IMR-90 (cell line): ENCODE measurements at regions of chr6 and their contacts with region 1.

Region 1: DNA sequence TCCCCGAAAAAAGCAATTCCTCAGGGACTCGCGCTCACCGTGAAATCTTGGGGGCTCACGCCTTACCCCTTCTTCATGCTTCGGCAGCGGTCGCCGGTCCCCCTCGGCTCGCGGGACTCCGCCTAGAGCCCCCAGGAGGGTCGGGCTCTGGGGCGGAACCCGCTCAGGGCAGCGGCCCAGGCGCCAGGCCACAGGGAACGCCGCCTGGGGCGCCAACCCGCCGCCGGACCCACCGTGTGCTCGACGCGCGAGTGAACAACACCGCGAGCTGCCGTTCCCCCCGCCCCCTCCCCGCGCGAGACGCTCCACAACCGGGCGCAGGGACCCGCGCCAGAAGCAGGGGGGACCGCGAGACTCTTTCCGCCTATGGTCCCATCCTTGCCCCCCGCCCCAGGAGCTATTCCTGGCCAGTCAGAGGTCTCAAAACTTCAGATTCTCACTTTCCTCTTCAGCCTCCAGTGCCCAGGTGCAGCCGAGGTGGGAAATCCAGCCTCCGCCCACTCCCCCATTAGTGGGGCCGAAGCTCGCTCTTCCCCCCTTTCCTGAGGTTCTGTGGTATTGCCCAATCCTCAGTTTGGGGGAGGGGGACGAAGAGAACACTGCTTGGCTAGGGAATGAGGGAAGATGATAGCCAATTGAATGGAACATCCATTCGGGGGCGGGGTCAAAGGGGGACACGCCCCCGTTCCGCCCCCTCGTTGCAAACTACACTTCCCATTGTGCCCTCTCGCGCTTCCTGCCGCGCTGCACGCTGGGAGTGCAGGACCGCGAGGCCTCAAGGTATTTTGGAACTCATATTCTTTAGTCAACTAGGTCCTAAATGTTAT is at the start of gene WASF1:
- DNase-seq: peak; percentile 98
- ATAC-seq: peak; percentile 95
- H3K4me3 ChIP-seq: peak within 1 kb of the TSS; percentile 81
- H3K27ac ChIP-seq: peak within 1 kb of the TSS; percentile 98
- H3K4me1 ChIP-seq: 0 out of 2 replicates have a peak, but pooled peaks cover 5% of the 10 kb centered on the region
- H3K27me3 ChIP-seq: no peaks in the 10 kb centered on the region
- CTCF ChIP-seq: no peak
- POLR2A ChIP-seq: no peak; the same call in 1 of the 2 replicates
- RAD21 ChIP-seq: no peak
- total RNA-seq, gene WASF1: 3.0 and 4.4 TPM in 2 replicates

Region 2: GRCh38 chr6:109760208-109760607 is 419.4 kb before region 1 on chr6:
- CTCF ChIA-PET with region 1: no interaction called
- POLR2A ChIA-PET with region 1: no interaction called
- dilution Hi-C with region 1: no loop called
- in situ Hi-C with region 1: no loop called
- intact Hi-C with region 1: no loop called
- DNase-seq: peak; percentile 33
- ATAC-seq: no peak
- H3K4me3 ChIP-seq: no peak overlapping the region
- H3K27ac ChIP-seq: no peak overlapping the region
- H3K4me1 ChIP-seq: peaks cover 2% of the 10 kb centered on the region
- H3K27me3 ChIP-seq: no peaks in the 10 kb centered on the region
- CTCF ChIP-seq: no peak
- POLR2A ChIP-seq: no peak
- RAD21 ChIP-seq: no peak

Region 3: DNA sequence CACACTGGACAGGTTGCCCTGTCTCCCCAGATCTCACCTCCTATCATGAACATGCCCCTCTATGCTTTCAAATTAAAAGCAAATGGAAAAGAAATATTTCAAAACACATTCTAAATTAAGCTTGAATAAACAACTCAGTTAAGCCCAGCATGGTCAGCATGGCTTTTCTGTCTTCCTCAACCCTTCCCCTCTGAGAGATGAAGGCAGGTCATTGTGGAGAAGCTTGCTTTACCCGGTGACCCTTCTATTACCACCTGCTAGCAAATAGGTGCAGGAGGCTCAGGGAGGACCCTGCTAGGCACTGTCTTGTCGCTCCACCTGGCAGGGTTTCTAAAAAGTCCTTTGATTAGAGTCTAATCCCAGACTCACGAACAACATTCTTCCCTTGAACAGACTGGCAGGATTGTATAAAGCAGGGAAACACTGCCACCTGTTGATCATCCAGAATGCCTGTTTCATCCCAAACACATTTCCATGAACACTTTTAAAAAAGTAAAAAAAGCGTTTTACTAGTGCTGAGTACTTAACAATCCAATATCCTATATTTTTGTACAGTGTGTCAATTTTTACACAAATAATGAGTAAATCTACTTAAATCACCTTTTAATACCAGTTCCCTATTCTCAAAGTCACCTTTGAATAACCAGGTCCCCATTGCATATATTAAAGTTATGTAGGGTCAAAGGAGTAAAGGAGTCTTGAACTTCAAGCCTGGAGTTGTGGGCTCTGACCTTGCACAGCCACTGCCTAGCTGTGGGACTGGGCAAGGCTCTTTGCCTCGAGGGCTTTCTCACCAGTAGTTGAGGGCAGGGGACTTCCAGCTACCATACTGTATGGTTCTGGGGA is 126.0 kb before region 1 on chr6:
- CTCF ChIA-PET with region 1: no interaction called
- POLR2A ChIA-PET with region 1: no interaction called
- dilution Hi-C with region 1: no loop called
- in situ Hi-C with region 1: no loop called
- intact Hi-C with region 1: loop called (anchors 5 kb)
- DNase-seq: peak; percentile 68
- ATAC-seq: peak; percentile 79
- H3K4me3 ChIP-seq: no peak overlapping the region
- H3K27ac ChIP-seq: no peak overlapping the region
- H3K4me1 ChIP-seq: no peaks in the 10 kb centered on the region
- H3K27me3 ChIP-seq: peaks cover 29% of the 10 kb centered on the region
- CTCF ChIP-seq: peak; percentile 91
- POLR2A ChIP-seq: no peak
- RAD21 ChIP-seq: peak; percentile 80

Region 4: DNA sequence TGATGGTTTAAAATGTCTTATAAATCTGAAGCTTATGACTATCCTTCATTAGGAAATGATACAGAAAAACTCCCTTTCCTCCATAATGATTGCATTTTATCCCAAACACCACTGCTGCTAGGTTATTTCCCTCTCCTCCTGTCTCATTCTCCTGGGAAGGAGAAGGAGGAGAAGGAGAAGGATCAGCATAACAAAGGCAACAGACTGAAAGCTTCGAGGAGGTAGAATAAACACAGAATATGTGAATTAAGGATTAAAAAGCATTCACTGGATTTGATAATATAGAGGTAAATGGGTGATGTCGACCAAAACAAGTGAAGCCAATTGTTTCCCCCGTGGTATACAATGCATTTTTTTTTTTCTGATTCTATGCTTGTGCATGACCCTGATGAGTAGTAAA is 82.2 kb before region 1 on chr6:
- CTCF ChIA-PET with region 1: no interaction called
- POLR2A ChIA-PET with region 1: no interaction called
- dilution Hi-C with region 1: no loop called
- in situ Hi-C with region 1: no loop called
- intact Hi-C with region 1: loop called (anchors 2 kb)
- DNase-seq: no peak
- ATAC-seq: peak; percentile 28
- H3K4me3 ChIP-seq: no peak overlapping the region
- H3K27ac ChIP-seq: peak overlapping the region; percentile 12; the same call in 1 of the 2 replicates
- H3K4me1 ChIP-seq: 0 out of 2 replicates have a peak, but pooled peaks cover 2% of the 10 kb centered on the region
- H3K27me3 ChIP-seq: no peaks in the 10 kb centered on the region
- CTCF ChIP-seq: no peak
- POLR2A ChIP-seq: no peak
- RAD21 ChIP-seq: no peak

Region 5: GRCh38 chr6:110325197-110325596 is 145.6 kb after region 1 on chr6:
- CTCF ChIA-PET with region 1: no interaction called
- POLR2A ChIA-PET with region 1: no interaction called
- dilution Hi-C with region 1: no loop called
- in situ Hi-C with region 1: no loop called
- intact Hi-C with region 1: loop called (anchors 2 kb)
- DNase-seq: peak; percentile 85
- ATAC-seq: peak; percentile 78
- H3K4me3 ChIP-seq: no peak overlapping the region
- H3K27ac ChIP-seq: peak overlapping the region; percentile 83; the same call in 1 of the 2 replicates
- H3K4me1 ChIP-seq: peaks cover 34% of the 10 kb centered on the region
- H3K27me3 ChIP-seq: no peaks in the 10 kb centered on the region
- CTCF ChIP-seq: no peak
- POLR2A ChIP-seq: no peak
- RAD21 ChIP-seq: no peak

Region 6: DNA sequence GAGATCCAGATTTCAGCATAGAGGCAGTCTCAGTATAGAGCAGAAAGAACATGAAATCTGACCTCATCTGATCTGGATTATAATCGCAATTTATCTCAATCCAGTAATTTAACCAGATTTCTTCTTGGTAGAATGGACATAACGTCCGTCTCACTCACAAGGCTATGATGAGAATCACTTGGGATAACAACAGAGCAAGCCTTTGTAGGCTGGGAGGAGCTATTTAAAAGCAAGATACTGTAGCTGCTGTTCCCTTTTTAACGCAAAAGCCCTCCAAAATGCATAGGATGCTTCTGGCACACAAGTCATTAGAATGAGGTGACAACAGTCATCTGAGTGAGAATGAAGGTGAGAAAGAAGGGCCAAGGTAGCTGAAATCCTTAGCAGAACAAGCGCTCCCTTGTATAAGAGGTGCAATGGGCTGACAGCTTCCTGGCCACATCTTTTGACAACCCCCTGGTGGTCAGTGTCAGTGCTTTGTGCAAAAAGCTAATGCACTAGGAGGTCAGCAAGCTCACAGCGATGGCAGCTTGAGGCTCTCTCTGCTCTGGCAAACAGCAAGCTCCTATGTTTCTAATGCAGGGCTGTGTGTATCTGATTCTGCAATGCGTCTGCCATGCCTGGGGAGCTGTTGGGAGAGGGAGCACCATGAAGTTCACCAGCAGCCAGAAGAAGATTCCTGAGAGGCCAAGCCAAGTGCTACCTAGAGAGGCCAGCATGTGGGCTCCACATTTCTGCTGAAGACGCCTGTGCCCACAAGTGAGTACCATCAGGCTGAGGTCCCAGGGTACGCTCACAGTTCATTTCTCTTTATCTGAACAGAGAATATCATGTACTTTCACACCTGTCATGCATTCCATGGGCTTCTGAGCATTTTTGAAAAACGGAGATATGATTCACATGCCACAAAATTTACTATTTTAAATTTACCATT is 162.3 kb after region 1 on chr6:
- CTCF ChIA-PET with region 1: no interaction called
- POLR2A ChIA-PET with region 1: no interaction called
- dilution Hi-C with region 1: no loop called
- in situ Hi-C with region 1: no loop called
- intact Hi-C with region 1: loop called (anchors 5 kb)
- DNase-seq: peak; percentile 32
- ATAC-seq: peak; percentile 68
- H3K4me3 ChIP-seq: no peak overlapping the region
- H3K27ac ChIP-seq: no peak overlapping the region
- H3K4me1 ChIP-seq: no peaks in the 10 kb centered on the region
- H3K27me3 ChIP-seq: peaks cover 6% of the 10 kb centered on the region; the same call in 1 of the 2 replicates
- CTCF ChIP-seq: peak; percentile 39
- POLR2A ChIP-seq: no peak
- RAD21 ChIP-seq: peak; percentile 41

Region 7: GRCh38 chr6:110389689-110390382 is 210.2 kb after region 1 on chr6:
- CTCF ChIA-PET with region 1: interaction called, 19 read pairs
- POLR2A ChIA-PET with region 1: no interaction called
- dilution Hi-C with region 1: no loop called
- in situ Hi-C with region 1: no loop called
- intact Hi-C with region 1: loop called (anchors 1 kb)
- DNase-seq: no peak
- ATAC-seq: no peak
- H3K4me3 ChIP-seq: no peak overlapping the region
- H3K27ac ChIP-seq: no peak overlapping the region
- H3K4me1 ChIP-seq: no peaks in the 10 kb centered on the region
- H3K27me3 ChIP-seq: peaks cover 6% of the 10 kb centered on the region
- CTCF ChIP-seq: no peak
- POLR2A ChIP-seq: no peak
- RAD21 ChIP-seq: no peak